AG04449 (cell line): ENCODE measurements at regions of chr9 and their contacts with region 1.

Region 1: DNA sequence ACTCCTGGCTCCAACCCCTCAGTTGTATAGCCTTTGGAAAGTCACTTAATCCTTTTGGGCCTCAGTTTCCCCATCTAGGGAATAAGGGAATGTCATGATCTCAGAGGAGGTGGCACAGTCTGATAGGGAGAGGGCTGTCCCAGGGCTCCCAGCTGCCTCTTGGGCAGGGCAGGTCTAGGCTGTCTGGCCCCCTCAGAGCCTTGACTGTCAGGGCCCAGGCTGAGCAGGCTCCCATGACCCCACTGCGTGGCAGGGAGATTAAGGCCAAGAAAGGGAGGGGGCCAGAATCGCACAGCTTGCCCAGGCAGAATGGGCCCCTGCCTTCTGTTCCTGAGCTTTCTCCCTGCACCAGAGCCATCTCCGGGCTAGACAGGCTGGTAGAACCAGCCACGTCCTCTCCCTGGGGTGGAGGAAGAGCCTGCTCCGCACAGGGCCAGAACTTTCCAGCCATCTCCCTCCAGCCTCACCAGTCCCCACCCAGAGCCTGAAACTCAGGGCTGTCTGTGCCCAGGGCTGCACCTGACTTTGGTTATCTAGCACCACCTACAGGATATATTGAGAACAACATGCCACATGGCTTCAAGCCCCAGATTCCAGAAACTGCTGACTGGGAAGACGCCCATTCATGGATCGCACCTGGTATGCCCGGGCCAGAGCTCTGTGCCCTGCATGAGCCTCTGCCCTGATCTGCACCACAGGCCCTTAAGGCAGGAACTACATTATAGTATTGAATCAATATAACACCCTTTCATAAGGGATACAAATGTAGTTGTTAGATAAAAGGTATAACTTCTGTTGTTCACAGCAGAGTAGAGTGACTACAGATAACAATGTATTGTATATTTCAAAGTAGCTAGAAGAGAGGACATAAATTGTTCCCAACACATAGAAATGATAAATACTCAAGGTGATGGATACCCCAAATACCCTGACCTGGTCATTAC is 32.0 kb downstream of the NAIF1 start:
- DNase-seq: no peak
- H3K4me3 ChIP-seq: no peak overlapping the region
- CTCF ChIP-seq: peak; percentile 66

Region 2: GRCh38 chr9:127258606-127259471 is 776.3 kb before region 1 on chr9:
- CTCF ChIA-PET with region 1: no interaction called
- POLR2A ChIA-PET with region 1: no interaction called
- DNase-seq: no peak
- H3K4me3 ChIP-seq: no peak overlapping the region
- CTCF ChIP-seq: no peak

Region 3: GRCh38 chr9:127854184-127854806 is 180.8 kb before region 1 on chr9 and contains the start of gene ENG:
- CTCF ChIA-PET with region 1: no interaction called
- POLR2A ChIA-PET with region 1: no interaction called
- DNase-seq: no peak
- H3K4me3 ChIP-seq: peak within 1 kb of the TSS; percentile 68
- CTCF ChIP-seq: peak; percentile 48

Region 4: DNA sequence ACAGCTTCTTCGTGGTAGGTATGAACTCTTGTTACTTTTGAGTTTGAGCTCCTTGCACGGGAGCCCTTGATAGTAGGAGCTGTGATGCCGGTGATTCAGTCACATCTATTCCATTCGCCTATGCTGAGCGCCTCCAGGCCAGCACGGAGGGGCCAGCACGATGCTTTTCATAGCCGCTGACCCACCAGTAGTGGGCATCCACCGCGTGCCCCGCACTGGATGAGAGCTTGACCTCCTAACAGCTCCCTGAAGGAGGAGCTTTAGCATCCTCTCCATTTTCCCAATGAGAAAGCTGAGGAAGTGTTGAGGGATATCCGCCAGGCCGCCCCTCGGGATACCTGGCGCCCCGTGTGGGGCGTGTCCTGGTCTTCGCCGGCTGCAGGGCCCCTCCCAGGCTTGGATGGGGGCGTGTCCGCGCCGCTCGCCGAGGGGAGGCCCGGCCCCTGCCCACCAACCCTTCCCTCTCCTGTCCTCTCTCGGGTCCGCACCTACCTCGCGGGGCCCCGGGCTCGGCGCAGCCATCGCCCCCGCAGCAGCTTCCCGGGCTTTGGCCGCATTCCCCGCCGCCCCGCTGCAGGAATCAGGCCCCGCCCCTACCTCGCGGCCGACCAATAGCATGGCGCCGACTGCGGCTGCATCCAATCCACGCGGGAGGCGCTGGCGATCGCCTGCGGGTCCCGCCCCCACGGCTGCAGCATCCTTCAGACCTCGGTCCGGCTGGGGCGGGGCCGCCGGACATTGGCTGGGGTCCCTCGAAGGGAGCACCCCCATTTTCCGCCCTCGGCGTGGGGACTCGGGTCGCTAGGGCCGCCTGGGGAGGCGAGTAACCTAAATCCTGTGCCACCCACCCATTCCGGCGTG is 104.6 kb before region 1 on chr9 and contains the start of gene PIP5KL1:
- CTCF ChIA-PET with region 1: interaction called, 23 read pairs
- POLR2A ChIA-PET with region 1: no interaction called
- DNase-seq: no peak
- H3K4me3 ChIP-seq: peak within 1 kb of the TSS; percentile 70
- CTCF ChIP-seq: peak; percentile 21

Region 5: GRCh38 chr9:127955294-127956035 is 79.6 kb before region 1 on chr9:
- CTCF ChIA-PET with region 1: interaction called, 19 read pairs
- POLR2A ChIA-PET with region 1: no interaction called
- DNase-seq: no peak
- H3K4me3 ChIP-seq: no peak overlapping the region
- CTCF ChIP-seq: no peak

Region 6: GRCh38 chr9:128020692-128021091 is 14.4 kb before region 1 on chr9:
- CTCF ChIA-PET with region 1: interaction called, 32 read pairs
- POLR2A ChIA-PET with region 1: no interaction called
- DNase-seq: no peak
- H3K4me3 ChIP-seq: no peak overlapping the region
- CTCF ChIP-seq: no peak

Region 7: GRCh38 chr9:128159784-128160602 is 124.9 kb after region 1 on chr9 and contains the start of gene BBLN:
- CTCF ChIA-PET with region 1: no interaction called
- POLR2A ChIA-PET with region 1: no interaction called
- DNase-seq: peak; percentile 17
- H3K4me3 ChIP-seq: peak within 1 kb of the TSS; percentile 81
- CTCF ChIP-seq: no peak